H1 (cell line): ENCODE measurements at regions of chr18 and their contacts with region 1.

Region 1: GRCh38 chr18:34122724-34123334 is 101.9 kb downstream of the NOL4 start:
- DNase-seq: no peak
- H3K4me3 ChIP-seq: no peak overlapping the region
- H3K27ac ChIP-seq: no peak overlapping the region
- H3K4me1 ChIP-seq: no peaks in the 10 kb centered on the region
- H3K27me3 ChIP-seq: peaks cover 0 to 2% (median 0%) of the 10 kb centered on the region in 4 experiments; a peak in 4 of 7 replicates
- CTCF ChIP-seq: peak in 2 of 3 experiments; percentile 81 to 99; a peak in 3 of 4 replicates
- EP300 ChIP-seq: no peak
- POLR2A ChIP-seq: no peak
- RAD21 ChIP-seq: peak; percentile 87

Region 2: GRCh38 chr18:33839441-33840211 is 283.2 kb before region 1 on chr18:
- CTCF ChIA-PET with region 1: interaction called, 19 read pairs
- POLR2A ChIA-PET with region 1: no interaction called
- DNase-seq: no peak
- H3K4me3 ChIP-seq: peak overlapping the region in 1 of 4 experiments; percentile 9; a peak in 1 of 8 replicates
- H3K27ac ChIP-seq: no peak overlapping the region
- H3K4me1 ChIP-seq: peaks cover 0 to 7% (median 4%) of the 10 kb centered on the region in 4 experiments; a peak in 4 of 7 replicates
- H3K27me3 ChIP-seq: no peaks in the 10 kb centered on the region
- CTCF ChIP-seq: peak in 2 of 3 experiments; percentile 53 to 70; a peak in 2 of 4 replicates
- EP300 ChIP-seq: no peak
- POLR2A ChIP-seq: no peak
- RAD21 ChIP-seq: peak; percentile 76

Region 3: DNA sequence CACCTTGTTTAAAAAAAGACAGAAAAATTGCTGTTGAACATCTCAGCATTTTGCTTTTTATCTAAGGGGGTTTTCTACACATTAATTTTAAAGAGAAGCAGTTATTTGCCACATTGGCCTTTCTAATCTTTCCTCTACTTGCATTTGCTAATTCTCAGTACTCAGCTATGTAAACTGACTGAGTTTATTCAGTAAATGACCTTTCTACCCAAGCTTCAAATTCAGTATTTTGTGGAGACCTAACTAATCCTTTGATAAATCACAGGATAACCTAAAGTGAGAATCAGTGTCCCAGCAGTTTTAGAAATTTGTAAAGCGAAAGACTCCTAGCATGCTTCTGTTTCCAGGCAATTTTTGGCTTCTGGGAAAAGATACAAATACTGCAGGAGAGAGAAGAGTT is 256.4 kb before region 1 on chr18:
- CTCF ChIA-PET with region 1: no interaction called
- POLR2A ChIA-PET with region 1: no interaction called
- DNase-seq: no peak
- H3K4me3 ChIP-seq: no peak overlapping the region
- H3K27ac ChIP-seq: no peak overlapping the region
- H3K4me1 ChIP-seq: no peaks in the 10 kb centered on the region
- H3K27me3 ChIP-seq: no peaks in the 10 kb centered on the region
- CTCF ChIP-seq: no peak
- EP300 ChIP-seq: no peak
- POLR2A ChIP-seq: no peak
- RAD21 ChIP-seq: no peak

Region 4: DNA sequence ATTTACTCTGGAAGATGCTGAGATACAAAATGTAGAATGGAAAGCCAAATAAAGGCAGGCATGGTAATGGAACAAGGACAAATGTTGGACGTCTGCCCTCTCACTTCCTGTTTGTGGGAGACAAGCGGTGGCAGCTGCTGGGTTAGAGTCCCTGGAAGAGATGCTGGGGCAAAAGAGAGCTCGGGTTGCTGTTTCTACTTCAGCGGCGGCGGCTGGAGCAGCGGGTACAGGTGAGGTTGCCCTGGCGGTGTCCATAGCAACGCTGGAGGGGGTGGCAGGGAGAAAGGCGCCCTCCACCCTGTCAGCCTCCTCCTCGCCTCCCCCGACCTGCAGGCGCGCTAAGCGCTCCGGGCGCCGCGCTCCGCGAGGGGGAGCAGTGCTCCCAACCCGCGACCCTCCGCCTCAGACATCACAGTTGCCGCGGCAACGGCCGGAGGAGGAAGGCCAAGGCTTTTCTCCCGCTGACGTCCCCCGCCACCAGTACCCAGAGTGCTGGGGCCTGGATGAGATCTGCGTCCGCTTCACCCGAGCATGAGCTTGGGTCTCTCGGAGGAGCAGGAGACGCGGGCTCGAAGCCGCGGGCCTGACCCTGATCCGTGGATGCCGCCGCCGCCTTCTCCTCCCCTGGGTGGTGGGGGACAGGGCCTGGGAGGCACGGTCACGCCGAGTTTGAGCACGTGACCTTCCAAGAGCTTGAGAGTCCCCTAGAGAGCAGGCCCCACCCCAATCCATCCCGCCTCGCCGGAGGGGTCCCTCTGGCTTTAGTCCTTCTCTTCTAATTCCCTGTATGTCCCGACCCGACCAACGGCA is 36.3 kb after region 1 on chr18:
- CTCF ChIA-PET with region 1: interaction called, 15 read pairs
- POLR2A ChIA-PET with region 1: no interaction called
- DNase-seq: peak; percentile 74 to 85
- H3K4me3 ChIP-seq: peak overlapping the region; percentile 34 to 62 (median 50)
- H3K27ac ChIP-seq: no peak overlapping the region
- H3K4me1 ChIP-seq: peaks cover 0 to 3% (median 1%) of the 10 kb centered on the region in 4 experiments; a peak in 4 of 7 replicates
- H3K27me3 ChIP-seq: peaks cover 0 to 5% (median 0%) of the 10 kb centered on the region in 4 experiments; a peak in 2 of 7 replicates
- CTCF ChIP-seq: peak; percentile 50 to 65 (median 64)
- EP300 ChIP-seq: no peak
- POLR2A ChIP-seq: 0 out of 3 replicates have a peak, but pooled peaks of 1 of the 2 experiments have one; percentile 38
- RAD21 ChIP-seq: peak; percentile 40 to 55; a peak in 3 of 4 replicates

Region 5: GRCh38 chr18:34224423-34225217 is 101.8 kb after region 1 on chr18 and contains the start of gene NOL4:
- CTCF ChIA-PET with region 1: interaction called, 11 read pairs
- POLR2A ChIA-PET with region 1: no interaction called
- DNase-seq: peak; percentile 93 to 98
- H3K4me3 ChIP-seq: peak within 1 kb of the TSS; percentile 49 to 73 (median 62)
- H3K27ac ChIP-seq: no peak within 1 kb of the TSS
- H3K4me1 ChIP-seq: peaks cover 3 to 6% (median 4%) of the 10 kb centered on the region in 4 experiments; a peak in 6 of 7 replicates
- H3K27me3 ChIP-seq: peaks cover 8 to 41% (median 26%) of the 10 kb centered on the region in 4 experiments; a peak in 6 of 7 replicates
- CTCF ChIP-seq: peak; percentile 79 to 98 (median 95)
- EP300 ChIP-seq: peak in 1 of 2 experiments; percentile 72; a peak in 1 of 3 replicates
- POLR2A ChIP-seq: no peak
- RAD21 ChIP-seq: peak; percentile 71 to 75
- total RNA-seq, gene NOL4: 1.6 and 2.6 TPM in 2 replicates

Region 6: GRCh38 chr18:34314847-34315246 is 192.0 kb after region 1 on chr18:
- CTCF ChIA-PET with region 1: interaction called, 38 read pairs
- POLR2A ChIA-PET with region 1: no interaction called
- DNase-seq: no peak
- H3K4me3 ChIP-seq: no peak overlapping the region
- H3K27ac ChIP-seq: no peak overlapping the region
- H3K4me1 ChIP-seq: no peaks in the 10 kb centered on the region
- H3K27me3 ChIP-seq: no peaks in the 10 kb centered on the region
- CTCF ChIP-seq: no peak
- EP300 ChIP-seq: no peak
- POLR2A ChIP-seq: no peak
- RAD21 ChIP-seq: no peak